ENCODE measurements at regions of chr10 and their contacts with region 1.

Region 1: GRCh38 chr10:101095542-101096213 is 33.9 kb downstream of the KAZALD1 start:
- DNase-seq: peak; percentile 65 to 84 (median 80)
- ATAC-seq: peak; percentile 73 to 75
- H3K4me3 ChIP-seq: no peak overlapping the region
- H3K27ac ChIP-seq: no peak overlapping the region
- H3K4me1 ChIP-seq: no peaks in the 10 kb centered on the region
- H3K27me3 ChIP-seq: no peaks in the 10 kb centered on the region

Region 2: GRCh38 chr10:101141616-101142532 is 46.2 kb after region 1 on chr10:
- intact Hi-C with region 1: loop called (anchors 2 kb)
- DNase-seq: peak; percentile 78 to 92 (median 91)
- ATAC-seq: peak; percentile 81 to 84
- H3K4me3 ChIP-seq: no peak overlapping the region
- H3K27ac ChIP-seq: no peak overlapping the region
- H3K4me1 ChIP-seq: no peaks in the 10 kb centered on the region
- H3K27me3 ChIP-seq: no peaks in the 10 kb centered on the region

Measured in right cardiac atrium (tissue), 5 donors.